ENCODE measurements at regions of chr7 and their contacts with region 1.

Region 1: GRCh38 chr7:54758702-54759592 is at the start of gene SEC61G:
- DNase-seq: peak; percentile 96
- H3K4me3 Mint-ChIP-seq: peak within 1 kb of the TSS; percentile 100
- H3K27ac Mint-ChIP-seq: peak within 1 kb of the TSS; percentile 96
- H3K4me1 Mint-ChIP-seq: peaks cover 37% of the 10 kb centered on the region
- H3K27me3 Mint-ChIP-seq: peaks cover 7% of the 10 kb centered on the region
- total RNA-seq, gene SEC61G: 159 to 170 TPM

Region 2: GRCh38 chr7:54773472-54774399 is 14.8 kb after region 1 on chr7:
- CTCF ChIA-PET with region 1: interaction called, 33 read pairs
- POLR2A ChIA-PET with region 1: interaction called, 30 read pairs
- DNase-seq: peak; percentile 69
- H3K4me3 Mint-ChIP-seq: peak overlapping the region; percentile 66
- H3K27ac Mint-ChIP-seq: no peak overlapping the region
- H3K4me1 Mint-ChIP-seq: peaks cover 9% of the 10 kb centered on the region
- H3K27me3 Mint-ChIP-seq: peaks cover 29% of the 10 kb centered on the region

Region 3: DNA sequence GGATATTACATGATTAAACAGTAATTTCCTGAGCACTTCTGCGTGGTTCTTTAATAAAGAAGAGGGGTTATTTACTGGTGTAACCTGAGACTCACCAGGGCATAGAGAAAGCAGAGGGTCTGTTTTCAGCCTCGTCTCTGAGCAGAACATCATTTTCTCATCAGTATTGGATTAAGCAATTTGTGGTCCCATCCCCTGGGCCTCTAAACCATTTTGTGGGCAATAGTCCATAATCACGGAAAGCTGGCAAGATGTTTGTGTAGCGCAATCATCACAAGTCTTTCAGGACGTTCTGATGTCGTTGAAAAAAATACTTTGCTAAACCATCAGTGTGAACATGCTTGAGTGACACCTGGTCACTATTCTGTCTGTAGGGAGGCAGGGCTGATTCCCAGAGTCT is 37.2 kb after region 1 on chr7:
- CTCF ChIA-PET with region 1: no interaction called
- POLR2A ChIA-PET with region 1: no interaction called
- DNase-seq: no peak
- H3K4me3 Mint-ChIP-seq: no peak overlapping the region
- H3K27ac Mint-ChIP-seq: no peak overlapping the region
- H3K4me1 Mint-ChIP-seq: no peaks in the 10 kb centered on the region
- H3K27me3 Mint-ChIP-seq: peaks cover 15% of the 10 kb centered on the region

Region 4: DNA sequence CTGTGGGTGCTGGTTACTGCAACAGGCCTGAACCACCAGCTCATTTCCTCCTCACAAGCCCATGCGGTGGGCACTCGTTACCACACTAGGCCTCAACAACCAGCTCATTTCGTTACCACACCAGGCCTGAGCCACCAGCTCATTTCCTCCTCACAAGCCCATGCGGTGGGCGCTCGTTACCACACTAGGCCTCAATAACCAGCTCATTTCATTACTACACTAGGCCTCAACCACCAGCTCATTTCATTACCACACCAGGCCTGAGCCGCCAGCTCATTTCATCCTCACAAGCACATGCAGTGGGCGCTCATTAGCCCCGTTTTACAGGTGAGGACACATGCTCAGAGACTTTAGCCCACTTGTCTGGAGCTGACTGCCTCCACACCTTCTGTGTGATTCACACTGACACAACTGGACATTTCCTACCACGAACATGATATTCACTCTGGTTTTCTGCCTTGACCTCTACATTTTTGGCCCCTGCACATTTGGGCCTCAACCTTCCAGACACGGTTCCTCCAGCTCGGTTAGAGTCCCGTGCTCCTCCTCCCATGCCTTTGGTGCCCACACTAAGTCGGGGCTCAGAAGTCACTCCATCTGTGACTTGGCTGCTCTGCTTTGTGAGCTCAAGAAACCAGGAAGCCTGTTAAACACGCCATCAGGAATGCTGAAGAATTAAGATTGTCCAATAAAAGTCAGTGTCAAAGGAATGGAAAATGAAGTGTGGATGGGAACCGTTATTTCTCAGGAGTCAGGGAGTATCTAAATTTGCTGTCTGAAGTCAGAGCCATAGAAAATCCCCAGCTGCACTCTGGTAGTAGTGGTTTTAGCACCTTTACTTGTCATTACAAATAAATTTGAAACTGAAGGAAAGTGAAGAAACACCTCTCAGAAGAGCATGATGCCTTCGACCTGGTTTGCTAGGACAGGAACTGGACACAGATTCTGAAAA is 550.4 kb after region 1 on chr7:
- CTCF ChIA-PET with region 1: no interaction called
- POLR2A ChIA-PET with region 1: interaction called, 15 read pairs
- DNase-seq: peak; percentile 88
- H3K4me3 Mint-ChIP-seq: peak overlapping the region; percentile 19
- H3K27ac Mint-ChIP-seq: peak overlapping the region; percentile 66
- H3K4me1 Mint-ChIP-seq: peaks cover 49% of the 10 kb centered on the region
- H3K27me3 Mint-ChIP-seq: peaks cover 57% of the 10 kb centered on the region

Region 5: DNA sequence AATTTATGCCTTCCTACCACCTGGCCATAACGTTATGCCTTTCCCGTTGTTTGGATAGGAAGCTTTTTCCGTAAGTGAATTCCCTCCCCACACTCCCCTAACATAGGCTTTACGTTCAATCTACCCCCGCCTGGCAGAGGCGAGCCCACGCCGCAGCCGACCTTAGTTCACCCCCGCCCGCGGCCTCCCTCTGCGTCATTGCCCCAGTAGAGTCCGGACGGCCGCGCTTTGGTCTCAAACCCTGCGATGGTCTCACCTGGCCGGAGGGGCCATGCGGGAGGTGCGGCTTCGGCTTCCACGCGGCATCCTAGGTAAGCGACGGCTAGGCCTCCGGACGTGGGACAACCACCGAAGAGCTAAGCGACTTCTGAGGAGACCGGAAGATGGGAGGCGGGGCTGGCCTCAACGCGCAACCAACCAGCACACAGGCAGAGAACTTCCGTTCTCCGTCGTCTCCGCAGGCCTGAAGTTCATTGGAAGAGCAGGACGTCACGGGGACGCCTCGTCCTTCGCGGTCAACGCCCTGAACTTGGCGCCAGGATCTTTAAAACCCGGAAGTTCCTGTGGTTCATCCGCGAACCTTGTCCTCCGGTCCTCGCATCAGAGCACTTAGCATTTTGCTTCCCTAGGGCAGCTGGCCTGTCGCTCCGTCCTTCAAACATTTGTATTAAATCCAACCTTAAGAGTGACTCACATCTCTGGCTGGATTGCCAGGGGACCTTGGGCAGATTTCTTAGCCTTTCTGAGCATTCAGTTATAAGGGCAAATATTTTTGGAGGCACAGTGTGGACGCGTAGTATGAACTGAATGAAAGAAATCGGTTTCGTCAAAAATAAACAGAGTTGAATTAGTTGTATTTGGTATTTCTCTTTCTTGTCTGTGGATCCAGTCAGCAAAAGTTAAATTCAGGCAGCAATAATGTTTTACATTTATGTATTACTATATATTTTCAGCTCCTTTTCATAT is 1347.4 kb after region 1 on chr7 and contains the start of gene CHCHD2:
- CTCF ChIA-PET with region 1: no interaction called
- POLR2A ChIA-PET with region 1: interaction called, 20 read pairs
- DNase-seq: peak; percentile 96
- H3K4me3 Mint-ChIP-seq: peak within 1 kb of the TSS; percentile 99
- H3K27ac Mint-ChIP-seq: peak within 1 kb of the TSS; percentile 94
- H3K4me1 Mint-ChIP-seq: peaks cover 44% of the 10 kb centered on the region
- H3K27me3 Mint-ChIP-seq: no peaks in the 10 kb centered on the region
- total RNA-seq, gene CHCHD2: 482 to 505 TPM